ENCODE measurements at regions of chr20 and their contacts with region 1.

Region 1: GRCh38 chr20:49982346-49983122 is at the start of gene SNAI1:
- DNase-seq: peak; percentile 76
- ATAC-seq: peak; percentile 90
- H3K4me3 Mint-ChIP-seq: peak within 1 kb of the TSS; percentile 72
- H3K27ac Mint-ChIP-seq: peak within 1 kb of the TSS; percentile 68
- H3K4me1 Mint-ChIP-seq: peaks cover 24% of the 10 kb centered on the region
- H3K27me3 Mint-ChIP-seq: no peaks in the 10 kb centered on the region
- CTCF ChIP-seq: no peak
- total RNA-seq, gene SNAI1: 0.61 and 0.67 TPM in 2 replicates

Region 2: GRCh38 chr20:49936153-49937027 is 46.1 kb before region 1 on chr20 and contains the start of gene RNF114:
- CTCF ChIA-PET with region 1: interaction called, 6 read pairs
- POLR2A ChIA-PET with region 1: no interaction called
- intact Hi-C with region 1: loop called (anchors 1 kb)
- DNase-seq: peak; percentile 83
- ATAC-seq: peak; percentile 90
- H3K4me3 Mint-ChIP-seq: peak within 1 kb of the TSS; percentile 97
- H3K27ac Mint-ChIP-seq: peak within 1 kb of the TSS; percentile 88
- H3K4me1 Mint-ChIP-seq: peaks cover 58% of the 10 kb centered on the region
- H3K27me3 Mint-ChIP-seq: no peaks in the 10 kb centered on the region
- CTCF ChIP-seq: no peak
- total RNA-seq, gene RNF114: 56.5 and 56.6 TPM in 2 replicates

Region 3: DNA sequence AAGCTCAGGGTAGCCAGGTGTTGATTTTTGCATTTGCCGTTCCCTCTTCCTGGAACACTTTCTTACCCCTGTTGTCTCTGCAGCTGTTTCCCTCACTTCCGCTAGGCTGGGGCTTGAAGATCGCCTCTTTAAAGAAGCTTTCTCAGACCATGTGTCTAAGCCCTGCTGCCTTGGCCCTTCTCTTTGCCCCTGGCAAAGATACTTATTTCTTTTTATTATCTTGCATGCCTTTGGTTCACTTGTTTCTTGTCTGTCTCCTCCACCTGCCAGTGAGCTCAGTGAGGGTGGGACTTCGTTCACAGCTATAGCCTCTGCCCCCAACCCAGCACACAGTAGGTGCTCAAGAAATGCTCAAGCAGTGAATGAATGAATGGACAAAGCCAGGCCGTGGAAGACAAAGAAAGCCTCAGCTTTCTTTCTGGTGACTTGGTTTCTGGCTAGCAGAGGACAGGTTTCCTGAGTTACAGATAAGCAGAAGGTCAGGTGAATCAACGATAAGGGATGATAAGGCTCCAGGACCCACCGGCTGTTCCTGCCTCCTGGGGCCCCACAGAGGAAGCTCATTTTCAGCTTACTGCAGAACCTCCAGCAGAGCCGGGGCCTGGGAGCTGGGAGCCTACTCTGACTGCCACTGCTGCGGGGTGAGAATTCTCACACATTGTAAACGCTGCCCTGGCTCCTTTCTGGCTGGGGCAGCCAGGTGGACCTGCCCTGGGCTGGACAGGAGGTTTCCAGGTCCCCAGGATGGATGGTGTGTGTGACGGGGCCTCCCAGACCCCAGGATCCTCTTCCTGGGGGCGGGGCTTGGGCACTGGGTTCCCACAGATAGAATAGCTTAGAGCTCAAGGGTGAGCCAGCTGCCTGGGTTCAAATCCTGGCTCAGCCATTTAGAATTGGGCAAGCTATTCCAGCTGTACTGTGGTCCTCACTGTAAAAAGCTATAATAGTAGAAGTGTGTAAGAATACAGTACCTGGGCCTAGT is 30.0 kb after region 1 on chr20:
- CTCF ChIA-PET with region 1: interaction called, 6 read pairs
- POLR2A ChIA-PET with region 1: no interaction called
- intact Hi-C with region 1: loop called (anchors 1 kb)
- DNase-seq: no peak
- ATAC-seq: peak; percentile 81
- H3K4me3 Mint-ChIP-seq: no peak overlapping the region
- H3K27ac Mint-ChIP-seq: peak overlapping the region; percentile 75
- H3K4me1 Mint-ChIP-seq: peaks cover 16% of the 10 kb centered on the region
- H3K27me3 Mint-ChIP-seq: peaks cover 3% of the 10 kb centered on the region
- CTCF ChIP-seq: no peak

Region 4: DNA sequence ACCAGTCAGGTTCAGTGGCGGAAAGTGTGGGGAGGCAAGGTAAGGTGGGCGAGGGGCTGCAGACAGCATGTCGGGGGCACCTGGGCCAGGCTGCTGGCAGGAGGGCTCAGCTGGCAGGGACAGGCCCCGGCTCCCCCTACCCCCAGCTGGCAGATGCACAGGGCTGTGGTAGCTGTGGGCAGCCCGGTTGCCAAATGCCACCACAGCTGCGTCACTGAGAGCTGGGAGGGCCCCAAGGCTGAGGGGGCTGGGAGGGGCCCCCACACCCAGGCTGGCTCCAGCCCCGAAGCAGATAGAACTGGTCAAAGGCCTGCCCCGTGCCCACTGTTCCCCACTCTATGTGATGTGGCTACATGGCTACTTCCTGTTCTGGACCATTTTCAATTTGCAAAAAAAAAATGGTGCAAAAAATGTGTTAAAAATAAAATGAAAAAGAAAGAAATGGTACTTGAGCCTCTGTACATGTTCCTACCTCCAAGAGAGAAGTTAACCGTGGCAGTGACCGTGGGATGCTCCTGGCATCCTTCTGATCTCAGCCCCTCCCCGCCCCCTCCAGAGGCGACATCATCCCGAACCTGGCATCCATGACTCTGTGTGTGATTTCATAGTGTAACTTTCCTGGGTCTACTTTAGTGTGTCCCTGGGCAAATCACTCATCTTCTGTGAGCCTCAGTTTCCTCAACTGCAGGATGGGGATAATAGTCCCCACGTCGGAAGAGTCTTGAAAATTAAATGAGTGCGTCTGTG is 66.1 kb after region 1 on chr20:
- CTCF ChIA-PET with region 1: interaction called, 15 read pairs
- POLR2A ChIA-PET with region 1: interaction called, 8 read pairs
- intact Hi-C with region 1: no loop called
- DNase-seq: peak; percentile 37
- ATAC-seq: peak; percentile 59
- H3K4me3 Mint-ChIP-seq: peak overlapping the region; percentile 5
- H3K27ac Mint-ChIP-seq: peak overlapping the region; percentile 9
- H3K4me1 Mint-ChIP-seq: peaks cover 39% of the 10 kb centered on the region
- H3K27me3 Mint-ChIP-seq: no peaks in the 10 kb centered on the region
- CTCF ChIP-seq: no peak

Region 5: GRCh38 chr20:50085452-50086365 is 103.2 kb after region 1 on chr20:
- CTCF ChIA-PET with region 1: interaction called, 49 read pairs
- POLR2A ChIA-PET with region 1: no interaction called
- intact Hi-C with region 1: loop called (anchors 1 kb)
- DNase-seq: no peak
- ATAC-seq: peak; percentile 82
- H3K4me3 Mint-ChIP-seq: peak overlapping the region; percentile 83
- H3K27ac Mint-ChIP-seq: peak overlapping the region; percentile 55
- H3K4me1 Mint-ChIP-seq: peaks cover 14% of the 10 kb centered on the region
- H3K27me3 Mint-ChIP-seq: no peaks in the 10 kb centered on the region
- CTCF ChIP-seq: no peak

Region 6: GRCh38 chr20:50179507-50180016 is 197.0 kb after region 1 on chr20:
- CTCF ChIA-PET with region 1: interaction called, 55 read pairs
- POLR2A ChIA-PET with region 1: no interaction called
- intact Hi-C with region 1: loop called (anchors 1 kb)
- DNase-seq: no peak
- ATAC-seq: no peak
- H3K4me3 Mint-ChIP-seq: no peak overlapping the region
- H3K27ac Mint-ChIP-seq: no peak overlapping the region
- H3K4me1 Mint-ChIP-seq: no peaks in the 10 kb centered on the region
- H3K27me3 Mint-ChIP-seq: no peaks in the 10 kb centered on the region
- CTCF ChIP-seq: no peak

Region 7: GRCh38 chr20:50528804-50529351 is 546.3 kb after region 1 on chr20:
- CTCF ChIA-PET with region 1: no interaction called
- POLR2A ChIA-PET with region 1: no interaction called
- intact Hi-C with region 1: no loop called
- DNase-seq: no peak
- ATAC-seq: peak; percentile 45
- H3K4me3 Mint-ChIP-seq: peak overlapping the region; percentile 63
- H3K27ac Mint-ChIP-seq: no peak overlapping the region
- H3K4me1 Mint-ChIP-seq: peaks cover 36% of the 10 kb centered on the region
- H3K27me3 Mint-ChIP-seq: no peaks in the 10 kb centered on the region
- CTCF ChIP-seq: no peak